ENCODE measurements at regions of chr20 and their contacts with region 1.

Region 1: GRCh38 chr20:50120897-50121693 is 8.1 kb upstream of the UBE2V1 start:
- DNase-seq: no peak
- ATAC-seq: peak; percentile 88
- H3K4me3 ChIP-seq: no peak overlapping the region
- H3K27ac ChIP-seq: peak overlapping the region; percentile 77
- H3K4me1 ChIP-seq: peaks cover 22% of the 10 kb centered on the region
- H3K27me3 ChIP-seq: no peaks in the 10 kb centered on the region
- CTCF ChIP-seq: peak; percentile 96

Region 2: GRCh38 chr20:50165684-50166554 is 44.8 kb after region 1 on chr20:
- CTCF ChIA-PET with region 1: interaction called, 23 read pairs
- POLR2A ChIA-PET with region 1: no interaction called
- in situ Hi-C with region 1: no loop called
- intact Hi-C with region 1: loop called (anchors 1 kb)
- DNase-seq: peak; percentile 99
- ATAC-seq: peak; percentile 95
- H3K4me3 ChIP-seq: peak overlapping the region; percentile 38 to 64
- H3K27ac ChIP-seq: peak overlapping the region; percentile 99
- H3K4me1 ChIP-seq: peaks cover 47% of the 10 kb centered on the region
- H3K27me3 ChIP-seq: no peaks in the 10 kb centered on the region
- CTCF ChIP-seq: no peak

Region 3: GRCh38 chr20:50172347-50173013 is 51.4 kb after region 1 on chr20:
- CTCF ChIA-PET with region 1: interaction called, 23 read pairs
- POLR2A ChIA-PET with region 1: no interaction called
- in situ Hi-C with region 1: no loop called
- intact Hi-C with region 1: loop called (anchors 1 kb)
- DNase-seq: no peak
- ATAC-seq: peak; percentile 96
- H3K4me3 ChIP-seq: peak overlapping the region; percentile 49 to 86
- H3K27ac ChIP-seq: peak overlapping the region; percentile 99
- H3K4me1 ChIP-seq: peaks cover 30% of the 10 kb centered on the region
- H3K27me3 ChIP-seq: no peaks in the 10 kb centered on the region
- CTCF ChIP-seq: no peak

Region 4: GRCh38 chr20:50179507-50180016 is 58.5 kb after region 1 on chr20:
- CTCF ChIA-PET with region 1: interaction called, 27 read pairs
- POLR2A ChIA-PET with region 1: interaction called, 4 read pairs
- in situ Hi-C with region 1: no loop called
- intact Hi-C with region 1: no loop called
- DNase-seq: no peak
- ATAC-seq: peak; percentile 61
- H3K4me3 ChIP-seq: no peak overlapping the region
- H3K27ac ChIP-seq: no peak overlapping the region; the same call in 1 of the 2 replicates
- H3K4me1 ChIP-seq: no peaks in the 10 kb centered on the region
- H3K27me3 ChIP-seq: no peaks in the 10 kb centered on the region
- CTCF ChIP-seq: peak; percentile 55

Region 5: DNA sequence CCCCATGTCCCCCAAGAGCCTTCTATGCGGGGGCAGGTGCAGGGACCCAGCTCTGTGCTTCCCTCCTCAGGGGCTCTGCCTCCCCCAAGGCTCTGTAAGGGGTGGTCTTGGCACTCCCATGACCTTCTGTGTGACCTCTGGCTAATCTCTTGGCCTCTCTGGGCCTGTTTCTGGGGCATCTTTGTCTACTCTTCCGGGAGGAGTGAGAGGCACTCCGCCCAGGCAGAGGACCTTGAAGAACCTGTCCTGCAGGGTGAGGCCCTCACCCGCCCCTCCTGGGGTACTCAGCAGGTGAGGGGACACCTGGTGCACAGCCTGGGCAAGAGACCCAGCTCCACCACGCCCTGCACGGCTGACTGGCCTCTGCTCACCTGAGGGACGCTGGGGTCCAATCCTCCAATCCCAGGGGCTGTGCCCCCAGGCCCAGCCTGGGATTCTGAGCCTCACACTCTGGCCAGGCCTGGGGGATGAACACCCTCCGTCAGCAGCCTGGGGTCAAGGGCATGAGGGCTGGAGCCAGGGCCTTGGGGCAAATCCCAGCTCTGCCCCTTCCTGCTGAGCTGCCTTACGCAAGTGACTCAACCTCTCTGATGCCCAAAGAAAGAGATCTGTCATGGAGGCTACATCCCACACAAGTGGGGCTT is 239.1 kb after region 1 on chr20:
- CTCF ChIA-PET with region 1: no interaction called
- POLR2A ChIA-PET with region 1: no interaction called
- in situ Hi-C with region 1: no loop called
- intact Hi-C with region 1: no loop called
- DNase-seq: no peak
- ATAC-seq: no peak
- H3K4me3 ChIP-seq: no peak overlapping the region
- H3K27ac ChIP-seq: no peak overlapping the region
- H3K4me1 ChIP-seq: no peaks in the 10 kb centered on the region
- H3K27me3 ChIP-seq: no peaks in the 10 kb centered on the region
- CTCF ChIP-seq: no peak

Measured in Panc1 (cell line).